ENCODE measurements at regions of chr17 and their contacts with region 1.

Region 1: GRCh38 chr17:66310528-66311148 is 8.2 kb downstream of the PRKCA start:
- DNase-seq: no peak
- ATAC-seq: no peak
- H3K4me3 Mint-ChIP-seq: no peak overlapping the region
- H3K27ac Mint-ChIP-seq: peak overlapping the region; percentile 47
- H3K4me1 Mint-ChIP-seq: peaks cover 81% of the 10 kb centered on the region
- H3K27me3 Mint-ChIP-seq: no peaks in the 10 kb centered on the region

Region 2: GRCh38 chr17:66330646-66331037 is 20.0 kb after region 1 on chr17:
- CTCF ChIA-PET with region 1: interaction called, 18 read pairs
- POLR2A ChIA-PET with region 1: interaction called, 6 read pairs
- DNase-seq: no peak
- ATAC-seq: no peak
- H3K4me3 Mint-ChIP-seq: peak overlapping the region; percentile 68
- H3K27ac Mint-ChIP-seq: peak overlapping the region; percentile 89
- H3K4me1 Mint-ChIP-seq: peaks cover 71% of the 10 kb centered on the region
- H3K27me3 Mint-ChIP-seq: no peaks in the 10 kb centered on the region

Region 3: DNA sequence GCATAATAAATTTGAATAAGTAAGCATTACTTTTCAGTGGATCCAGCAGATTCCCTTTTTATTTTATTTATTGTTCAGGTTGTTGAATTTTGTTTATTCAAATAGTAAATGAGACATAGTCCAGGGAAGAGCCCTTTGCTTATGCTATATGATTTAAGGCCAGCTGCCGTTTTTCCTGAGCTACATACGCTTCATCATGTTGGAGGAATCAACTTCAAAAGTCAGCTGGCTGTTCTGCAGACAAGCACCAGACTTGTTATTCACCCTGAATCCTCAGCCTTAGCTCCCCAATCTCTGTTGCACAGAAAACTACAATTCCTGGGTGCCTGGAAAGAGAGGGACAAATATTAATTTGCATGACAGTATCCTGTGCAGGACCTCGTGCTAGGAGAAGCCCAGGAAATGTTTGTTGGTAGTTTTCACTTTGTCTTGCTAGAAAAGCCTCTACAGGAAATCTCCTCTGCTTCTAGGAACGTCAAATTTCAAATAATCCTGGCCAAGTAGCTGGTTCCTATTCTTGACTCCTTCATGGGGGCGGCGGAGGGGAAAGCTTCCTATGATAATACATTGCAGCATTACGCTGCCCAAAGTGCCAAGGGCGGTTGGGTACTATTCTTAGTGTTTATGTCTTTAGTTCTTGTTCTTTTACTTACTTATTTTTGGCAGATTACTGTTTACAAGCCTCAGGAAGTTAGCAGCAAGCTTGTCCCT is 93.4 kb after region 1 on chr17:
- CTCF ChIA-PET with region 1: interaction called, 11 read pairs
- POLR2A ChIA-PET with region 1: interaction called, 6 read pairs
- DNase-seq: no peak
- ATAC-seq: no peak
- H3K4me3 Mint-ChIP-seq: peak overlapping the region; percentile 69
- H3K27ac Mint-ChIP-seq: peak overlapping the region; percentile 89
- H3K4me1 Mint-ChIP-seq: peaks cover 90% of the 10 kb centered on the region
- H3K27me3 Mint-ChIP-seq: no peaks in the 10 kb centered on the region

Measured in activated CD8-positive, alpha-beta T cell treated with anti-CD3 and anti-CD28 coated beads, Interleukin-2, amount 10 ng/mL, durations not matched to agents 7 days and 5 days (primary cell).